ENCODE measurements at regions of chr14 and their contacts with region 1.

Region 1: DNA sequence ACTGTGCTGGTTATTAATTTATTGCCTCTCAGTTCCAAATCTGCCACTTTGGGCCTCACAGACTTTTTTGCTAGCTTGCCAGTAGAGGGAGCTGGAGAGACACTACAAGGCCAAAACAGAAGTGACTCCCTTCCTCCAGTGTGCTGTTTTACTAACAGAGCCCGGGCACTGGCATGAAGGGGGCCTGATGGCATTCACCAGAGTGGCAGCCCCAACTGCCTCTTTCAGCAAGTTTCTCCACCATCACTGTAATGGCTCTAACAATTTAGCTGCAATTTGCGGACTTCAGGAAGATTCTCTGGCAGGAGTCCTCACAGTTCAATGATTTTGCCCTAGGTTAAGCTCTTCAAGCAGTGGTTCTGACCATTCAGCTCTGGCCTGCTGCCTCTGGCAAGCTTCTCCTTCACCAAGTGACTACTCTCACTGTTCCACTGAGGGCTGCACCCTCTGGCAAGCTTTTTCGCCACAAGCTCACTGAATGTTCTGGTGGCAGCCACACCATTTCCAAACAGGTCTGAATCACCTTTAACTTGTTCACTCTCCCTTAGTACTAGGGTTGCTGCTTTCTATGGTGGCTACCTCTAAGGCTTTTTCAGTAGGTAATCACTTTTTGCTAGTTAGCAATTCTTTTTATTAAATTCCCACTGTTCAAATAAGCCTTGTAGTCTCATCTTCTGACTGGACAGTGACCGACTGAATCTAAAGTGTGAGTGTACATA is 104.9 kb downstream of the ZC3H14 start:
- DNase-seq: no peak
- H3K4me3 ChIP-seq: no peak overlapping the region
- H3K27ac ChIP-seq: peak overlapping the region in 3 of 4 donors; percentile 6 to 33 (median 7)
- H3K4me1 ChIP-seq: peaks cover 0 to 9% (median 8%) of the 10 kb centered on the region in 4 donors
- H3K27me3 ChIP-seq: no peaks in the 10 kb centered on the region
- CTCF ChIP-seq: peak; percentile 73 to 89 (median 75)
- EP300 ChIP-seq: no peak
- POLR2A ChIP-seq: no peak

Region 2: GRCh38 chr14:88868558-88869159 is 200.9 kb after region 1 on chr14:
- intact Hi-C with region 1: loop called (anchors 2 kb)
- DNase-seq: no peak
- H3K4me3 ChIP-seq: no peak overlapping the region
- H3K27ac ChIP-seq: no peak overlapping the region
- H3K4me1 ChIP-seq: peaks cover 0 to 5% (median 0%) of the 10 kb centered on the region in 4 donors
- H3K27me3 ChIP-seq: no peaks in the 10 kb centered on the region
- CTCF ChIP-seq: peak; percentile 39 to 52 (median 48)
- EP300 ChIP-seq: no peak
- POLR2A ChIP-seq: no peak

Region 3: DNA sequence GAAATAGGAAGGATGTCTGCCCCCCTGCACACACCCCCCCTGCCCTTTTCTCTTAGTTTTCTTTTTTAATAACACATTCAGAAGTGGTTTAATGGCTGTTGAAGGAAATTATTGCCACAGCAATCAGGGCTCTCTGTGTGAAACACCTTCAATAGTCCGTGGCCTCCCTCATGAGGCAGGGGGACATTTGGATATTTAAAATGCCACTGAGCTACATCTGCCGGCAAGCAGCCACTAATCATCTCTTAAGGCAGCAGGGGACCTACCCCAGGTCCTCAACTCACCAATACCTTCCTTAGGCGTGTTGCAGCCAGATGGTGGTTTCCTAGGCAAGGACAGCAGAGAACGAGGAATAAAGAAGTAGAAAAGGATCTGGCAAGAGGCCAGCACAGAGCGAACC is 439.9 kb after region 1 on chr14:
- intact Hi-C with region 1: no loop called
- DNase-seq: no peak
- H3K4me3 ChIP-seq: no peak overlapping the region
- H3K27ac ChIP-seq: no peak overlapping the region
- H3K4me1 ChIP-seq: no peaks in the 10 kb centered on the region
- H3K27me3 ChIP-seq: no peaks in the 10 kb centered on the region
- CTCF ChIP-seq: no peak
- EP300 ChIP-seq: no peak
- POLR2A ChIP-seq: no peak

Measured in esophagus muscularis mucosa (tissue), 4 donors.